AG04449 (cell line): ENCODE measurements at regions of chr6 and their contacts with region 1.

Region 1: GRCh38 chr6:138517635-138518034 is 18.3 kb upstream of the NHSL1 start:
- DNase-seq: no peak
- H3K4me3 ChIP-seq: no peak overlapping the region
- CTCF ChIP-seq: peak; percentile 80

Region 2: DNA sequence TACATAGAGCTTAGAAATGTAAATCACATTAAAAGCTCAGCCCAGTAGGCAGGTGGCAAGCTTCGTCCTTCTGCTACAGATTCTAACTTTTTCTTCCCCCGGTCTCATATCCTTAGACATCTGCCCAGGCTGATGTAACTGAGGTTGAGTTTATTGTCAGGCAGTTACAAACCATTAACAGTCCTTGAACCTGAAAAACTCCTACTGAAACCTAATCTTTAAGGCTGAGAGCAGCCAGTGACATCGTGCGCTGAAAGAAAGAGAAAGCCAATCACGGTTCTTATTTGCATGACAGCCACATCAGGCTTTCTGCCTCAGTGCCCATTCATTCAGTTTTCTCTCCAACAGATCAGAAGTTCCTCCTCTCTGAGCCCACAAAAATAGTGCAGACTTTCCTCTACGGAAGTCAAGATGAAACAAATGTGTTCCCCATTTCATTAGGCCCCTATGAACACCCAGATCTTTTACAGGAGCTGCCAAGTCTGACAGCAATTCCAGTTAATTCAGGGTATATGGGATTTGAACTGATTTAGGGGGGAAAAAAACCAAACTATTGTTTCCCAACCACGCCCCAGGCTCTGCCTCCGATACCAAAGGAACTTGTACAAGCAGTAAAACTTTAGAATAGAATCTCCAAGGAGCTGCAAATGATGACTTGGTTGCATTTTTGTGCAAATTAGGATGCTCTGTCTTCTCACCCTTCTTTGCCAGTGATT is 18.2 kb before region 1 on chr6 and contains the start of gene NHSL1:
- CTCF ChIA-PET with region 1: interaction called, 13 read pairs
- POLR2A ChIA-PET with region 1: no interaction called
- DNase-seq: no peak
- H3K4me3 ChIP-seq: no peak within 1 kb of the TSS
- CTCF ChIP-seq: no peak

Region 3: GRCh38 chr6:138538390-138539031 is 20.9 kb after region 1 on chr6:
- CTCF ChIA-PET with region 1: interaction called, 29 read pairs
- POLR2A ChIA-PET with region 1: no interaction called
- DNase-seq: no peak
- H3K4me3 ChIP-seq: no peak overlapping the region
- CTCF ChIP-seq: no peak

Region 4: DNA sequence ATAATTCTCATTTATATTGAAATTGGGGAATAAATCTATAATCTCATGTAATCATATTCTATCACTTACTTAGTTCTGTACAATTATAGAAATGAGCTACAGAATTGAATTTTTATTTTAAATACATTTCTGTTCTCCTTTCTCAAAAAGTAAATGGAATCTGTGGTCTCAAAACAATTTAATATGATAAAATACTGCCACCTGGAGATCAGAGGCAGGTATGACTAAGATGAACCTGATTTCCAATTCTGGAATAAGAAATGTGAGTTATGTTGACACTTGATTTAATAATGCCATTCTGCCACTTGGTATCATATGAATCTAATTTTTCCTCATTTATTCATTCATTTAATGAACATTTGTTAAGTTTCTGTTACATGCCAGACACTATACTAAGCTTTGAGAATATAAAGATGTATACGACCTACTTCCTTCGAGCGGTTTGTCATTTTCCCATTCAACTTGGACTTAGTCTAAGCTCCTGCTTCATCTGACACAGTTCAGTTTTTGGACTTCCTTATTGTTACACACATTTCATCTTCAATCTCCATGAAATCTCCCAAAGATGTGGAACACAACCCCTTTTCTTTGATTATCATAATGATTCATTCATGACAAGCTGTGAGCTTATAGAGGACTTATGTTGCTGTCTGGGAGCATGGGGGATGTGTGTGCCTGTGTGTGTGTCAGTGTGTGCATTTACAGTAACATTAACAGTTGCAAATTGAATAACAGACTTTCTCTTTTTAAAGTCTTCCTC is 248.4 kb after region 1 on chr6:
- CTCF ChIA-PET with region 1: interaction called, 15 read pairs
- POLR2A ChIA-PET with region 1: no interaction called
- DNase-seq: no peak
- H3K4me3 ChIP-seq: no peak overlapping the region
- CTCF ChIP-seq: peak; percentile 31